Lower leg skin (tissue), 4 donors: ENCODE measurements at regions of chr9 and their contacts with region 1.

Region 1: GRCh38 chr9:25302601-25303000 is 375.6 kb downstream of the TUSC1 start:
- DNase-seq: no peak
- H3K4me3 ChIP-seq: no peak overlapping the region
- CTCF ChIP-seq: no peak
- POLR2A ChIP-seq: no peak

Region 2: GRCh38 chr9:25261445-25261844 is 41.2 kb before region 1 on chr9:
- intact Hi-C with region 1: loop called (anchors 5 kb)
- DNase-seq: no peak
- H3K4me3 ChIP-seq: no peak overlapping the region
- CTCF ChIP-seq: no peak
- POLR2A ChIP-seq: no peak